ENCODE measurements at regions of chr11 and their contacts with region 1.

Region 1: GRCh38 chr11:95231127-95231880 is at the start of gene SESN3:
- DNase-seq: peak; percentile 95 to 99 (median 98)
- ATAC-seq: peak; percentile 88
- H3K4me3 ChIP-seq: peak within 1 kb of the TSS; percentile 75 to 79
- H3K4me3 Mint-ChIP-seq: peak within 1 kb of the TSS; percentile 93
- H3K27ac ChIP-seq: peak within 1 kb of the TSS; percentile 61 to 76
- H3K27ac Mint-ChIP-seq: peak within 1 kb of the TSS; percentile 85
- H3K4me1 ChIP-seq: peaks cover 20% of the 10 kb centered on the region
- H3K4me1 Mint-ChIP-seq: peaks cover 59% of the 10 kb centered on the region
- H3K27me3 ChIP-seq: no peaks in the 10 kb centered on the region
- H3K27me3 Mint-ChIP-seq: no peaks in the 10 kb centered on the region
- CTCF ChIP-seq: no peak
- total RNA-seq, gene SESN3: 30.9 to 31.5 TPM

Region 2: DNA sequence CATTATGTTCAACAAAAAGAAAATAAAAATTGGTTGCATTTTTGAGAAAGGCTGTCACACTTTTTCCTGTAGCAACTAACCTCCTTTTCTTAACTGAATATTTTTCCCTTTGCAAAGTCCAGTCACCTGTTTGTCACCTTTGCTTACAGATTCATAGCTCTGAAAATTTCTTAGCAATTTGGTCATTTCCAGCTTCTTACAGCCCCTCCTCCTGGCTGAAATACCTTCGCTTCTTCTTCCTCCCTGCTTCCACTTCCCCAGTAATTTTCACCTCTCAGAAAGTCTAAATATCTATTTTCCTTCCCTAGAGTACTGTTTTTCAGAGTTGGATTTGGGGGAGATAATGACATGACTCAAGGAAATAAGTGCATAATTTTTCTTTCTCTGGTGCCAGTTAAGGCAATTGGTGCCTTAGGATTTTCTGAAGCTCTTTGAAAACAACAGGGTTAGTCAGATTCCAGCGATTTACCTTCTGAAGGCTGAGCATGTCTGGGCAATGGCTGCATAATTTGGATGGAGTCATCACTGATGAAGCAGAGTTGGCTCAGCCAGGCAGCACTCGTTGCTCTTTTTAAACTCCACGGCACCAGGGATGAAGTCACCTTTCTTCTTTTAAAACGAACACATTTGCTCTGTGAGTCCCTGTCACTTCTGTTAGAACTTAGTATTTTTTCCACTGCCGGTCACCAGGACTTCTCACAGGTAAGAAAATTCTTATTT is 525.2 kb before region 1 on chr11:
- CTCF ChIA-PET with region 1: no interaction called
- POLR2A ChIA-PET with region 1: no interaction called
- intact Hi-C with region 1: no loop called
- DNase-seq: no peak
- ATAC-seq: no peak
- H3K4me3 ChIP-seq: no peak overlapping the region
- H3K4me3 Mint-ChIP-seq: no peak overlapping the region
- H3K27ac ChIP-seq: no peak overlapping the region
- H3K27ac Mint-ChIP-seq: no peak overlapping the region
- H3K4me1 ChIP-seq: no peaks in the 10 kb centered on the region
- H3K4me1 Mint-ChIP-seq: no peaks in the 10 kb centered on the region
- H3K27me3 ChIP-seq: no peaks in the 10 kb centered on the region
- H3K27me3 Mint-ChIP-seq: peaks cover 4% of the 10 kb centered on the region
- CTCF ChIP-seq: no peak

Region 3: GRCh38 chr11:94973099-94973968 is 258.0 kb before region 1 on chr11 and contains the starts of genes CWC15 and KDM4D:
- CTCF ChIA-PET with region 1: no interaction called
- POLR2A ChIA-PET with region 1: interaction called, 3 read pairs
- intact Hi-C with region 1: loop called (anchors 5 to 10 kb)
- DNase-seq: peak; percentile 90 to 97 (median 95)
- ATAC-seq: peak; percentile 98
- H3K4me3 ChIP-seq: peak within 1 kb of the TSS; percentile 70 to 90
- H3K4me3 Mint-ChIP-seq: peak within 1 kb of the TSS; percentile 99
- H3K27ac ChIP-seq: peak within 1 kb of the TSS; percentile 72 to 83
- H3K27ac Mint-ChIP-seq: peak within 1 kb of the TSS; percentile 99
- H3K4me1 ChIP-seq: peaks cover 14% of the 10 kb centered on the region
- H3K4me1 Mint-ChIP-seq: peaks cover 34% of the 10 kb centered on the region
- H3K27me3 ChIP-seq: no peaks in the 10 kb centered on the region
- H3K27me3 Mint-ChIP-seq: no peaks in the 10 kb centered on the region
- CTCF ChIP-seq: no peak
- total RNA-seq, gene CWC15: 127 to 129 TPM
- total RNA-seq, gene KDM4D: 0.14 TPM in 1 of 2 experiments, not detected in the other

Region 4: DNA sequence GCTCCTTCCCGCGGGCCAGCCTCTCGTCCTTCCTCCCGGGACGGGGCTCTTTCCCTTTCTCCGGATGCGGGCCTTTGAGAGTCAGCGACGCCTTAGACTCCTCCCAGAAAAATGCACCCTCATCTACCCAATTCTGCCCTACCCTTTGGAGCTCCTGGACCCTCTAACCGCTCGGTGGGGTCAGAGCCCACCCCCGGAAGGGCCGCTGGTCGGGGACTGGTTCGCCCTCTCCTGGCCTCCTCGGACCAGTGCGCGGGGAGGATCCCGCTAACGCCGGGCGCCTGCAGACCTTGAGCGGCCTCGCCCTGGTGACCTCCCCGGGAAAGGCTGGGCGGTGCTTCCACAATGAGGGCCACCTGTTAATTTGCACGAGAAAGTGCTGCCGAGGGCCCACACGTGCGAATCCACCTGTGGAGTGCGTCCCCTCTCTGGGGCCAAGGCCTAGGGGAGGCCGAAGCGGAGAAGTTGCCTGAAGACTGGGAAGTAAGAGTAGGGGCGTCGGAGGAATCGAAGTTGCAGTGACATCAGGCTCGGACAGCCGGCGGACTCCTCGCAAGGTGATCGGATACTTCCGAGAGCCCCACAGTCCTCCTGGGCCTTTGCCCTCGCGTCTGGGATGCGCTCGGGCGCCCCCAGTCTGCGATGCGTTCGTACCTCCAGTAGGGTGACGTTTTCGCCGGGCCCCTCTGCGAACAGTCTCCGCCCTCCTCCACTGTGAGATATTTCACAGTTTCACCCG is 80.2 kb before region 1 on chr11:
- CTCF ChIA-PET with region 1: interaction called, 14 read pairs
- POLR2A ChIA-PET with region 1: interaction called, 24 read pairs
- intact Hi-C with region 1: loop called (anchors 1 to 2 kb)
- DNase-seq: peak; percentile 83 to 96 (median 91)
- ATAC-seq: peak; percentile 94
- H3K4me3 ChIP-seq: peak overlapping the region; percentile 64 to 82
- H3K4me3 Mint-ChIP-seq: peak overlapping the region; percentile 85
- H3K27ac ChIP-seq: peak overlapping the region; percentile 66 to 69
- H3K27ac Mint-ChIP-seq: peak overlapping the region; percentile 91
- H3K4me1 ChIP-seq: peaks cover 24% of the 10 kb centered on the region
- H3K4me1 Mint-ChIP-seq: peaks cover 35% of the 10 kb centered on the region
- H3K27me3 ChIP-seq: no peaks in the 10 kb centered on the region
- H3K27me3 Mint-ChIP-seq: peaks cover 4% of the 10 kb centered on the region
- CTCF ChIP-seq: peak; percentile 92

Region 5: GRCh38 chr11:95212609-95213008 is 18.7 kb before region 1 on chr11:
- CTCF ChIA-PET with region 1: interaction called, 3 read pairs
- POLR2A ChIA-PET with region 1: interaction called, 5 read pairs
- intact Hi-C with region 1: loop called in 1 of 2 experiments (anchors 2 kb)
- DNase-seq: no peak
- ATAC-seq: no peak
- H3K4me3 ChIP-seq: no peak overlapping the region
- H3K4me3 Mint-ChIP-seq: no peak overlapping the region
- H3K27ac ChIP-seq: no peak overlapping the region
- H3K27ac Mint-ChIP-seq: no peak overlapping the region
- H3K4me1 ChIP-seq: no peaks in the 10 kb centered on the region
- H3K4me1 Mint-ChIP-seq: peaks cover 31% of the 10 kb centered on the region
- H3K27me3 ChIP-seq: no peaks in the 10 kb centered on the region
- H3K27me3 Mint-ChIP-seq: no peaks in the 10 kb centered on the region
- CTCF ChIP-seq: no peak

Region 6: GRCh38 chr11:95289378-95290101 is 58.2 kb after region 1 on chr11:
- CTCF ChIA-PET with region 1: no interaction called
- POLR2A ChIA-PET with region 1: interaction called, 5 read pairs
- intact Hi-C with region 1: loop called in 1 of 2 experiments (anchors 5 kb)
- DNase-seq: no peak
- ATAC-seq: no peak
- H3K4me3 ChIP-seq: no peak overlapping the region
- H3K4me3 Mint-ChIP-seq: no peak overlapping the region
- H3K27ac ChIP-seq: no peak overlapping the region
- H3K27ac Mint-ChIP-seq: no peak overlapping the region
- H3K4me1 ChIP-seq: no peaks in the 10 kb centered on the region
- H3K4me1 Mint-ChIP-seq: no peaks in the 10 kb centered on the region
- H3K27me3 ChIP-seq: no peaks in the 10 kb centered on the region
- H3K27me3 Mint-ChIP-seq: peaks cover 3% of the 10 kb centered on the region
- CTCF ChIP-seq: no peak

Region 7: DNA sequence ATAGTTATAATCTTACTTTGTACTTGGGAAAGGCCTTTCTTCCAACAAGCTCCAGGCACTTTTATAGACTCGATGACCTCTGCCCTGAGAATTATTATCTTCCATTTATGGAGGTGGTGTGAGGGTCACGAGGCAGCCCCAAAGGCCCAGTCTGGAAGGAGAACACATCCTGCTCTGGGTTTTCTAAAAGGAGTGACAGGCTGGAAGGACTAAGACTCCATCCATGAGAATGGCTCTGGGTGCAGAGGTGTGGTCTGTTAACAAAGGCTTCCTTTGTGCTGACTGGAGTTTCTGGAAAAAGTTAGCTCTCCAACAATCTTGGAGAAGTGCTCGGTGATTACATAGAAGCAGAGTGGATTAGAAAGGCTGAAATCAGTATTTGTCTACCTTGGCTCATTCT is 74.4 kb after region 1 on chr11:
- CTCF ChIA-PET with region 1: no interaction called
- POLR2A ChIA-PET with region 1: no interaction called
- intact Hi-C with region 1: no loop called
- DNase-seq: no peak
- ATAC-seq: no peak
- H3K4me3 ChIP-seq: no peak overlapping the region
- H3K4me3 Mint-ChIP-seq: no peak overlapping the region
- H3K27ac ChIP-seq: no peak overlapping the region
- H3K27ac Mint-ChIP-seq: no peak overlapping the region
- H3K4me1 ChIP-seq: no peaks in the 10 kb centered on the region
- H3K4me1 Mint-ChIP-seq: peaks cover 10% of the 10 kb centered on the region
- H3K27me3 ChIP-seq: no peaks in the 10 kb centered on the region
- H3K27me3 Mint-ChIP-seq: no peaks in the 10 kb centered on the region
- CTCF ChIP-seq: no peak

Region 8: DNA sequence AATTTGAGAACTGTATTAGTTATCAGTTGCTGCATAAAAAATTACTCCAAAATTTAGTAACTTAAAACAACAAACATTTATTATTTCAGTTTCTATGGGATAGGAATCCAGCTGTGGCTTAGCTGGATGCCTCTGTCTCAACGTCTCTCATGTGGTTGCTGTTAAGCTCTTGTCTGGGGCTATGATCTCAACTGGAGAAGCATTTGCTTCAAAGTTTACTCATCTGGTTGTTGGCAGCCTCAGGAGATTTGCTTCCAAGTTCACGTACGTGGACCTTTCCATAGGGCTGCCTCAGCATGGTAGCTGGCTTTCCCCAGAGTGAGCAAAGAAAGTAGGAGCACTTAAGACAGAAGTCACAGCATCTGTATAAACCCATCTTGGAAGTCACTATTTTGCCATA is 144.6 kb after region 1 on chr11:
- CTCF ChIA-PET with region 1: no interaction called
- POLR2A ChIA-PET with region 1: no interaction called
- intact Hi-C with region 1: no loop called
- DNase-seq: no peak
- ATAC-seq: no peak
- H3K4me3 ChIP-seq: no peak overlapping the region
- H3K4me3 Mint-ChIP-seq: no peak overlapping the region
- H3K27ac ChIP-seq: no peak overlapping the region
- H3K27ac Mint-ChIP-seq: no peak overlapping the region
- H3K4me1 ChIP-seq: no peaks in the 10 kb centered on the region
- H3K4me1 Mint-ChIP-seq: no peaks in the 10 kb centered on the region
- H3K27me3 ChIP-seq: peaks cover 0 to 2% of the 10 kb centered on the region in 2 experiments
- H3K27me3 Mint-ChIP-seq: peaks cover 13% of the 10 kb centered on the region
- CTCF ChIP-seq: no peak

Region 9: DNA sequence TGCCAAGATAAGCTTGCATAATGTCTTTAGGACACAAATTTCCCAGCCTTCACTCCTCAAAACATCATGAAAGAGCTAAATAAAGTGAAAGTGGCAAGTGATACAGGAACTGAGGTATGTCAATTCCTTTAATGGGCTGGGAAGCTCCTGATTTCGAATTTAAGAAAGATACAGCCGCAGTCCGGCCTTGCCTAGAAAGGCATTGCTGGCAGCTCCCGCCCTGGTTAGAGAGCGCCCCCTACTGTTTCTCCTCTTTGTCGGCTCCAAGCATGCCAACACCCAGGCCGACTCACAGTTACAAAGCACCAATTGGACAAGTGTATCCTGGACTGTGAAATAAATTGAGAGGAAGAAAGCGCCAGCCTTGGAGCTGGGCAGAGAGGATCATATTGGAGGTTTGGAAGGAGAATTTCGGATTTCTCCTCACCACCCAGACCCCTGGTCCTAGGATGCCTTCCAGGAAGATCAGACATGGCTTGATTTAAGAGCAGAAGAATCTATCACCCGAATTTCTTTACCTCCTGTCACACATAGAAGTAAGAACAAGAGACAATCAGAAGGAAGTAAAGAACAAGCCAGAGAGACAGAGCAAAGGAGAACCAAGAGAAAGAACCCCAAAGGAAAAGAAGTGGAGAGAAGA is 474.3 kb after region 1 on chr11:
- CTCF ChIA-PET with region 1: interaction called, 19 read pairs
- POLR2A ChIA-PET with region 1: interaction called, 15 read pairs
- intact Hi-C with region 1: loop called (anchors 1 to 5 kb)
- DNase-seq: peak; percentile 64 to 90 (median 87)
- ATAC-seq: peak; percentile 90
- H3K4me3 ChIP-seq: no peak overlapping the region
- H3K4me3 Mint-ChIP-seq: no peak overlapping the region
- H3K27ac ChIP-seq: no peak overlapping the region
- H3K27ac Mint-ChIP-seq: no peak overlapping the region
- H3K4me1 ChIP-seq: peaks cover 44% of the 10 kb centered on the region
- H3K4me1 Mint-ChIP-seq: peaks cover 8% of the 10 kb centered on the region
- H3K27me3 ChIP-seq: no peaks in the 10 kb centered on the region
- H3K27me3 Mint-ChIP-seq: no peaks in the 10 kb centered on the region
- CTCF ChIP-seq: peak; percentile 83

Measured in CD8-positive, alpha-beta T cell (primary cell).